ENCODE measurements at regions of chr3 and their contacts with region 1.

Region 1: DNA sequence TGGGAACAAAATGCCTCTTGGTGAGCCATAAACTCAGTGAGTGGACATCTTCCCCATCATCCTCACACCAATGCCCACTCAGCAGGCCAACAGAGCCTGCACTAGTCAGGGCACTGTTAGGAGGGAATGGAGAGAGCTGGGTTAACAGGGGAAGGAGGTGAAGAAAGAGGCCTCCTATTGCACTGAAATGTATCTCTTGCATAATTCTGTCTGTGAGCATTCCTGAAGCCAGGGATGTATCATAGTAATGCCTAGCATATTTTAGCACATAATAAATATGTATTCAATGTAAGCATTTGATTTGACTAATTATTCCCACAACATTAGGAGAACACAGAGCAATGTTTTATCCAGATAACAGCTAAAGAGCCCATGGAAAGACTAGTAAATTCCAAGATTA is 81.2 kb downstream of the ANO10 start:
- DNase-seq: no peak
- ATAC-seq: no peak
- H3K4me3 Mint-ChIP-seq: no peak overlapping the region
- H3K27ac Mint-ChIP-seq: no peak overlapping the region
- H3K4me1 Mint-ChIP-seq: no peaks in the 10 kb centered on the region
- H3K27me3 Mint-ChIP-seq: no peaks in the 10 kb centered on the region
- CTCF ChIP-seq: no peak

Region 2: DNA sequence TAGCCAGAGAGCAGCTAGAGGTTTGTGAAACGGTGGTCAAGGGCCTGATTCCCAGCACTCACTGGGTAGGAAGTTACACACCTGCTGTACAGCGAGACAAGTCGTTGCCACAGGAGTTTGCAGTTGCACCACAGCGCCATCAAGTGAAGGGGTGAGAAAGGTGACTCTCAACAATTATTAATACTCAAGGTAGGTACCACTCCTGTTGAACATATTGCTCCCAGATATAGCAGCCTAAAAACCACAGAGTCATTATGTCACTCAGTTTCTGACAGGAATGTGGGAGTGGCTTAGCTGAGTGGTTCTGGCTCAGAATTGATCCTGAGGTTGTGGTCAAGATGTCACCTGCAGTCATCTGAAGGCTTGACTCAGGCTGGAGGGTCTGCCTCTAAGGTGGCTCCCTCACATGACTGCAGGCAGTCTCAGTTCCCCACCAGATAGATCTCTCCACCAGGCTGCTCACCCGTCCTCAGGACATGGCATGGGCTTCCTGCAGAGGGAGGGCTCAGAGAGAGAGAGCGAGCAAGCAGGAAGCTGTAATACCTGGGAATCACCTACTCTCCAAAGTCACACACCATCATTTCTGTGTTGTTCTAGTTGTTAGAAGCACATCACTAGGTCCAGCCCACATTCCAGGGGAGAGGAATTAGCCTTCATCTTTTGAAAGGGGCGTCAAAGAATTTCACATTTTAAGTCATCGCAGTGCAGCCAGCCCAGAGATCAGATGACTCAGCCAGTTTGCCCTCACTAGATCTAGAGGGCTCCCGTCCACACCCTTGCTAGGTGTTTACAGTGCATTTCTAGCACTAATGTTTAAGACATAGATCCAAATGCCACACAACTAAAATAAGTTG is 98.2 kb after region 1 on chr3:
- CTCF ChIA-PET with region 1: interaction called, 8 read pairs
- POLR2A ChIA-PET with region 1: no interaction called
- intact Hi-C with region 1: loop called (anchors 5 kb)
- DNase-seq: peak; percentile 70
- ATAC-seq: peak; percentile 82
- H3K4me3 Mint-ChIP-seq: no peak overlapping the region
- H3K27ac Mint-ChIP-seq: no peak overlapping the region
- H3K4me1 Mint-ChIP-seq: peaks cover 5% of the 10 kb centered on the region
- H3K27me3 Mint-ChIP-seq: peaks cover 4% of the 10 kb centered on the region
- CTCF ChIP-seq: peak; percentile 53

Region 3: DNA sequence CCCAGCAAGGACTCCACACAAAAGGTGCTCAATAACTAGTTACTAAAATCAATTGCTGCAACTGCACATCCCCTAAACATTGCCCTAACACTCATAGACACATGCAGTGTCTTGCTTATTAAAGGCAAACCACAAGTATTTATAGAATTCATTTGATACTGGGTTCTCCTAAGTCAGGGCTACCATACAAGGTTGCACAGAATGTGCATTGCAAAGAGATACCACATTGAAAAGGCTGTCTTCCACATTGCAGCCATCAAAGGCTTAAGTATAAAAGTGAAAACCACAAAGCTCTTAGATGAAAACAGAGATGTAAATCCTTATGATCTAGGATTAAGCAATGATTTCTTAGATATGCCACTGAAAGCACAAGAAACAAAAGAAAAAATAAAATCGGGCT is 667.5 kb after region 1 on chr3:
- CTCF ChIA-PET with region 1: no interaction called
- POLR2A ChIA-PET with region 1: no interaction called
- intact Hi-C with region 1: loop called (anchors 10 kb)
- DNase-seq: no peak
- ATAC-seq: peak; percentile 60
- H3K4me3 Mint-ChIP-seq: no peak overlapping the region
- H3K27ac Mint-ChIP-seq: no peak overlapping the region
- H3K4me1 Mint-ChIP-seq: peaks cover 22% of the 10 kb centered on the region
- H3K27me3 Mint-ChIP-seq: peaks cover 38% of the 10 kb centered on the region
- CTCF ChIP-seq: no peak

Measured in activated CD8-positive, alpha-beta T cell treated with anti-CD3 and anti-CD28 coated beads for 36 hours (primary cell).